ENCODE measurements at regions of chr19 and their contacts with region 1.

Region 1: GRCh38 chr19:53628296-53628695 is 3.5 kb upstream of the DPRX start:
- DNase-seq: no peak

Region 2: DNA sequence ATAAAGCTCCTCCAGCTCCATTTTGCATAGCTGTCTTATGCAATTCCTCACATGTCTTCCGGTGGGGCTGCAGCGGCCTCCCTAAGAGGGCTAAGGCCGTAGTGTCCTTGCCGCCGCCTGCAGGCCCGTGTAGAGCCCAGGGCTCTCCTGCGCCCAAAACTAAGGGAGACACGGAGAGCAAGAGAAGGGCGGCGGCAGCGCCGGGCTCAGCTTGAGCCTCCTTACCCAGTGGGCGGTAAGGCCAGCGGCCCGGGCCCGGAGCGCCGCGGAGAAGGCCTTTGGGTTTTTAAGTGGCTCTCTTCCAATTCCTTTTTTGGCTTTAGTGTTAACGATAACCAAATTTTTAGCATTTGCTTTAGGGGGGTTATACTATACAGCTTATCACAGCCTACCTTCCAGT is 403.7 kb before region 1 on chr19:
- intact Hi-C with region 1: no loop called
- DNase-seq: no peak

Region 3: DNA sequence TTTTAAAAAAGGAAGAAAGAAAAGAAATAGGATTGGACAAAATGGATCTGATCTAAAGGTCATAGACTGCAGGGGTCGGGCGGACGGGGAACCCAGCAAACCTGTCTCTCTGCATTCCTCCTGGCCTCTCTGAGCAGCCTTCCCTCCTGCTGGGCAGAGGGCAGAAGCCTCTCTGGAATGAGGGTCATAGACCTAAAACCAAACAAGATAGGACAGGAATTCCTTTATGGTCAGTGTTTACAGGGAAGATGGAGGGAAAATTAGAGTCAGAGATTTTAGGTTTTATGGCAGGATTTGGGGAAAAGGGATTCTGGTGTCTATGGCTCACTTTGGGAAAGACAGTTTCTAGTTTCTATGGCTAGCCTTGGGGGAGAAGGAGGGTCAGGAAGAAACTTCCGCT is 15.5 kb before region 1 on chr19:
- intact Hi-C with region 1: loop called in 1 of 2 experiments (anchors 1 kb)
- DNase-seq: no peak

Region 4: DNA sequence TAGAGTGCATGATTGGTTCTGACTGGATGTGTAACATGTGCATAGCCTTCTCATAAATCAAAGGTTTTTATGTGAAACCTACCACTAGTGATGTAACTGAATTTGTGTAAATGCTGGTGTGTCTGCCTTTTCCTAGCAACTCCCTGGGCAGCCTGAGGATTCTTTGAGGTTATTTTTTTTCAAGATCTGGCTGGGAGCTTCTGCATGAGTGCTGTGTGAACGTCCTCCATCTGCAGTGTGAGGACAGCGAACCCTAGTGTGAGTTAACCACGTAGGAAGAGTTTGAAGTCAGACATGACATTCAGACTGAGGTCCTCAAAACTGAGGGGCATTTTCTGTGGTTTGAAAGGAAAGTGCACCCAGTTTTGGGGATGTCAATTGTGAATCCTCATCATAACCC is 43.4 kb after region 1 on chr19:
- intact Hi-C with region 1: no loop called
- DNase-seq: no peak

Measured in posterior vena cava (tissue), 2 donors.